Activated CD4-positive, alpha-beta T cell treated with anti-CD3 and anti-CD28 coated beads, Interleukin-2, amount 10 ng/mL, durations not matched to agents 7 days and 5 days (primary cell): ENCODE measurements at regions of chr17 and their contacts with region 1.

Region 1: DNA sequence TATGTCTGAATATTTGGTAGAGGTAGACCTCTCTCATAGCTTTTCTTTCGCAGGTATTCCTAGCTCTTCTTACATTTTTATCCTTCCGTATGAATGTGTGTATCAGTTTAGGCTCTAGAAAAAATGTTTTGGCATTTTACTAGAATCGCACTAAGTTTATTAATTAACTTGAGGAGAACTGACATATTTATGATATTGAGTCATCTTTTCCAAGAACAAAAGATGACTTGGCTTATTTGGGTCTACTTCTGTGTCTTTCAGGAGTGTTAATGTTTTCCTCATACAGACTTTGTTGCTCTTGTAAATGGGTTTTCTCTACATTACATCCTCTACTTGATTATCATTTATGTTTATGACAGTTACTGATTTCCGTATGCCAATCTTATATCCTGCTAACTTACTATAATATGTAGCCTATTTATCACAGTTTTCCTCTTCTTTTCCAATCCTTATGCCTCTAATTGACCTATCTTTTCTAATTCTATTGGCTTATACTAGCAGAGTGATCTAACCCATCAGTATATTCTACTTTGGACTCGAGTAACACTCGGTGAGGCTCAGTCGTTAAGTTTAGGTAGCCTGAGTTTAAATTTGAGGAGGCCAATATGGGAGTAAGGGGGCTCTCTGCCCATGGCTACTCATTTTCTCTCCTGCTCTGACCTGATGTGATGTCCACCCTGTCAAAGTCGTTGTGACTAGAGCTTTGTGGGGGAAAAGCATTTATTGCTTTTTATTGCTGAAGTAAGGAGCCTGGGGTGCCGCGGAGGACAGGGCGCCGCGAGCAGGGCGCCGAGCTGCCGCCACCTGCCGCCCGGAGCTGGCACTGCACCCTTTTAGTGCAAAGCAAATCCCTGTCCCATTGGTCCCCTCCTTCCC is 20.0 kb downstream of the ST6GALNAC1 start:
- DNase-seq: peak; percentile 77
- H3K4me3 Mint-ChIP-seq: no peak overlapping the region
- H3K27ac Mint-ChIP-seq: no peak overlapping the region
- H3K4me1 Mint-ChIP-seq: peaks cover 2% of the 10 kb centered on the region
- H3K27me3 Mint-ChIP-seq: peaks cover 16% of the 10 kb centered on the region

Region 2: DNA sequence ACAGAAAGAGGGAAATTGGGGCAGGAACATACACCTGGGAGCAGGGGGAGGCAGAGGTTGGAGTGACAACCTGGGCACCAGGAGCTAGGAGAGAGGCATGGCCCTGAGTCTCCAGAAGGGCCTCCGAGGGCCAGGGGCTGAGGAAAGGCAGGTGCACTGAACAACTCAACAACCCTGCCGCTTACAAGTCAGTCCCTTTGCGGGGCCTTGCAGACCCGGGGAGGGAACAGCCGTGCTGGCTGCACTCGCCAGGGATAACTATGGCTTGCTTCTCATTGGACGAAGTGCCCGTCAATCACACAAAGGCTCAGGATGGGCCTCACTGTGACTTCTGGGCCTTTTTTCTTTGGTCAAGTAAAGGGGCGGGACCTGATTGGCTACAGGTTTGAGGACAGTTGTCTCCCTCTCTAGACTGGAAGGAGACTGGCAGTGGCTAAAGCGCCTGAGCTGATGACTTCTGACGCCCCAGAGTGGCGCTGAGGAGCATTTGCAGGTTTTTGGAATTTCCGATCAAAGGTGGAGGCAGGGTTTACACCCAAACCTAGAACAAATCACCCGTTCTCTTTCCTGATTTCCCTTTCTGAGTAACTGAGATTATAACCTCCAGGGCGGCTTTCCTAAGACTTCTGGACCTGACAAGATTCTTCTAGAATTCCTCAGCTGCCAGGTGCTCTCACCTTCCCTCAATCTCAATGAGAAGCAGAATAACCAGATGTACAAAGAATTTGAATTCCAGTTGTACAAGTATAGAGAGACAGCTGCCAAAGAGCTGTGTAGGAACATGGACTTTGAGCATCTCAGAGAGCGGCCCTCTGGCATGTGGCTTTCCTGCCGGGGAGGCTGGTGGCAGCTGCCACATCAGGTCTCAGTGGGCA is 10.3 kb before region 1 on chr17:
- CTCF ChIA-PET with region 1: interaction called, 17 read pairs
- POLR2A ChIA-PET with region 1: interaction called, 3 read pairs
- DNase-seq: no peak
- H3K4me3 Mint-ChIP-seq: no peak overlapping the region
- H3K27ac Mint-ChIP-seq: no peak overlapping the region
- H3K4me1 Mint-ChIP-seq: no peaks in the 10 kb centered on the region
- H3K27me3 Mint-ChIP-seq: no peaks in the 10 kb centered on the region

Region 3: GRCh38 chr17:76638263-76638662 is 14.8 kb after region 1 on chr17:
- CTCF ChIA-PET with region 1: interaction called, 10 read pairs
- POLR2A ChIA-PET with region 1: no interaction called
- DNase-seq: no peak
- H3K4me3 Mint-ChIP-seq: no peak overlapping the region
- H3K27ac Mint-ChIP-seq: no peak overlapping the region
- H3K4me1 Mint-ChIP-seq: peaks cover 5% of the 10 kb centered on the region
- H3K27me3 Mint-ChIP-seq: peaks cover 5% of the 10 kb centered on the region

Region 4: DNA sequence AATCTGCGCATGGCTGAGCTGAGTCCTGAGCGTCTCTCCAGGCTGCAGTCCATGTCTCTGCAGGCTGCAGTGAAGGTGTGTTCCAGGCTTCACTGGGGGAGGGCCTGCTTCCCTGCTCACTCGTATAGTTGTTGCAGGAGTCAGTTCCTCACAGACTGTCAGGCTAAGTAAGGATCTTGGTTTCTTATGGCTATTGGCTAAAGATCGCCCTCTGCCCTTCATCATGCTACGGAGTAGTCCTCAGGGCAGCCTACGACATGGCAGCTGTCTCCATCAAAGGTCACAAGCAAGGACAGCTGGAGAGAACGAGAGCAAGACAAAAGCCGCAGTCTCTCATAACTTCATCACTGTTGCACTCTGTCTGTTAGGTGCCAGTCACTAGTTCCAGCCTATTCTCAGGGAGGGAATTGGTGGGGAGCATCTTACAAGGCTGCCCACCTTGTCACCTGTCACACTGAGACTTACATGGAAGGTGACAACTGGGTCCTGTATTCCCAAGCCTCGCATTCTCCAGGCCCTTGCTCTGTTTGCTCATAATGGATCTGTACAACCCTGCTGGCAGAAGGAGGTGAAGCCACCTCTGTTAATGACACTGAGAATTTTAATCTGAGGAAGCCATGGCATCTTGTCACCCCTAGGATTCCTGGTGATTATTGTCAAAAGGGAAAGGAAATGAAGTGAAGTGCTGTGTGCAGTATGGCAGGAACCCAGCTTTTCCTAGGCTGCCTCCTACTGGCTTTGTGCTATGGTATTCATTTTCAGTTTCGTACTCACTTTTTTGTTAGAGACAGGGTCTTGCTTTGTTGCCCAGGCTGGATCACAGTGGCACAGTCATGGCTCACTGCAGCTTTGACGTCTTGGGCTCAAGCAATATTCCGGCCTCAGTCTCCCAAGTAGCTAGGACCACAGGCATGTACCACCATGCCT is 157.8 kb after region 1 on chr17:
- CTCF ChIA-PET with region 1: no interaction called
- POLR2A ChIA-PET with region 1: no interaction called
- DNase-seq: peak; percentile 20
- H3K4me3 Mint-ChIP-seq: no peak overlapping the region
- H3K27ac Mint-ChIP-seq: no peak overlapping the region
- H3K4me1 Mint-ChIP-seq: peaks cover 5% of the 10 kb centered on the region
- H3K27me3 Mint-ChIP-seq: no peaks in the 10 kb centered on the region